Activated CD8-positive, alpha-beta memory T cell treated with anti-CD3 and anti-CD28 coated beads, Interleukin-2, amount 10 ng/mL, durations not matched to agents 7 days and 5 days (primary cell): ENCODE measurements at regions of chr19 and their contacts with region 1.

Region 1: DNA sequence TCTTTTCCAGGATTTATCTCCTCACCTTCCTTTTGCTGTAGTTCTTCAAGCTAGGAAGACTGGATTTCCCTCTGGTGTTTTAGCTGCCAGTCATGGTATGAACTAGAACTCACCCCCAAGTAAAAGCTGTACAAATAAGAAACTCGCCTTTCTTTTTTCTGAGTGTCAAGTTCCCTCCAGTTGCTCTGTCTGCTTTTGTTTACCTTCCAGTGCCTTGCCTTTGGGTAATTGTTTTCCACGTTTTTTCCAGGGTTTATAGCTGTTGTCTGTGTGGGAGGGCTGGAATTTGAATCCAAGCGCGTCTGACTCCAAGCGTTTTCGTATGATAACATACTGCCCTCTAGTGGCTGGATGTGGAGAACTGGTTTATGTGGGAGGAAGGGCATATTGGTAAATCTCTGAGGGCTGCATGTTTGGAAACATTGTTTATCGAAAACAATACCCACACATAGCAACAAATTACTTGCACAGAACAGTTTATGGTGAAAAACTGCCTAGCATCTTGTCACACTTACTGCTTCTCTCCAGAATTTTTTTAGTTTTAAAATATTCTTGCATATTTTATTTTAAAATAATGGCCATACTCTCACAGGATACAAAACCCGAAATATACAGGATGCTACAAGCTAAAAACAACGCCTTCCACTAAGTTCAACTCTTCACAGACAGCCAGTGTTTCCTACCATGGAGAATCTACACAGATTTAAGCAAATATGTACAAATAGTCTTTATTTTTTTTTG is 19.2 kb downstream of the RCN3 start:
- DNase-seq: peak; percentile 78
- ATAC-seq: peak; percentile 85
- H3K4me3 Mint-ChIP-seq: peak overlapping the region; percentile 23
- H3K27ac Mint-ChIP-seq: peak overlapping the region; percentile 55
- H3K4me1 Mint-ChIP-seq: peaks cover 23% of the 10 kb centered on the region
- H3K27me3 Mint-ChIP-seq: no peaks in the 10 kb centered on the region

Region 2: DNA sequence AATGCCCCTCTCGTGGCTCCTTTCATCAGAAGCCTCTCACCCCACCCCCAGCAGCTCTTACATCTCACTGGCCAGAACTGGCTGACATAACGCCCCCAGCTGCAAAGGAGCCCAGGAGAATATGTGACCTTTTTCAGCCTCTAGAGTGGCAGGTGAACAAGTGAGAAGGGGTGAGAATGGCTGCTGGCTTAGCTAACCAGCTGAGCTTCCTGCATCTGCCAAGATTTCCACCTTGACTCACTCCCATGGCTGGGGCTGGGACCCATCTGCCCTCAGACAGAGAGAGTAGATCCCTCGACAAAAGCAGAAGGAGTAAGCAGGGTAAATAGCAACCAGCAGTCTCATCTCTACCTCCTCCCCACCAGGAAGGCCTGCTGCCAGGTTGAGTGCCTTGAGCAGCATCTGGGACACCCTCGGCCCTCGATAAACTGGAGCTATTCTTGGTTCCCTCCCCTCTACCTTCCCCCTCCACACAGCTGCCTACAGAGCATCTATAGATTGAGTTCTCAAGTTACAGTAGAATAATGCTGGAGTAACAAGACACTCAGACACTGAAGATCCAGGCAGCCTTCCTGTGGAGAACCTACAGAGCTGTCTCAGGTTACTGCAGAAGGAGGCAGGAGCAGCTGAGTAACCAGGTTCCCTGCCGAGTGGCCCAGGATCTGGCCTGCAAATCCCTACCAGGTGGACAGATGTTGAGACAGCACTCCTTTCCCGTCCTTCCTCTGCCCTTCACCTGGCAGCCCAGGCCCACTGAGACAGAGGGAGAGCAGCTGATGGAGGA is 143.4 kb before region 1 on chr19:
- CTCF ChIA-PET with region 1: no interaction called
- DNase-seq: no peak
- ATAC-seq: no peak
- H3K4me3 Mint-ChIP-seq: no peak overlapping the region
- H3K27ac Mint-ChIP-seq: no peak overlapping the region
- H3K4me1 Mint-ChIP-seq: peaks cover 12% of the 10 kb centered on the region
- H3K27me3 Mint-ChIP-seq: no peaks in the 10 kb centered on the region

Region 3: GRCh38 chr19:49473868-49474544 is 73.0 kb before region 1 on chr19 and contains the start of gene FLT3LG:
- CTCF ChIA-PET with region 1: interaction called, 16 read pairs
- DNase-seq: peak; percentile 96
- ATAC-seq: peak; percentile 73
- H3K4me3 Mint-ChIP-seq: peak within 1 kb of the TSS; percentile 87
- H3K27ac Mint-ChIP-seq: peak within 1 kb of the TSS; percentile 85
- H3K4me1 Mint-ChIP-seq: peaks cover 54% of the 10 kb centered on the region
- H3K27me3 Mint-ChIP-seq: no peaks in the 10 kb centered on the region
- total RNA-seq, gene FLT3LG: 112 to 151 TPM

Region 4: DNA sequence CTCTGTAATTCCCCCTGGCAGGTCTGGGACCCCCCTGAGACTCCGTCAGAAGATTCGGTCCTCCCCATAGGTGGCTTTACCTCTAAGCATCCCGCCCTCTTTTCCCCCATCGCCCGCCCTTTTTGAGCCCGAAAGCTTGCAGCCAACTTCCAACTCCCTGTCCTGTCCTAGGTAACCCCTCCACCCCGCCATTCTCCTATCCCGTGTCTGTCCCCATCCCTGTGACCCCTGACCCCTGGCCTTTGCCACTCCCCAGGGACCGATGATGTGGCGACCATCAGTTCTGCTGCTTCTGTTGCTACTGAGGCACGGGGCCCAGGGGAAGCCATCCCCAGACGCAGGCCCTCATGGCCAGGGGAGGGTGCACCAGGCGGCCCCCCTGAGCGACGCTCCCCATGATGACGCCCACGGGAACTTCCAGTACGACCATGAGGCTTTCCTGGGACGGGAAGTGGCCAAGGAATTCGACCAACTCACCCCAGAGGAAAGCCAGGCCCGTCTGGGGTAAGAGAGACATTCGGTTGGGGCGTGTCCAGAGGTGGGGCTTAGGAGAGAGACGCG is 18.7 kb before region 1 on chr19:
- CTCF ChIA-PET with region 1: interaction called, 28 read pairs
- DNase-seq: no peak
- ATAC-seq: no peak
- H3K4me3 Mint-ChIP-seq: peak overlapping the region; percentile 69
- H3K27ac Mint-ChIP-seq: no peak overlapping the region
- H3K4me1 Mint-ChIP-seq: peaks cover 19% of the 10 kb centered on the region
- H3K27me3 Mint-ChIP-seq: peaks cover 3% of the 10 kb centered on the region

Region 5: GRCh38 chr19:49580264-49581006 is 33.4 kb after region 1 on chr19 and contains the start of gene NOSIP:
- CTCF ChIA-PET with region 1: interaction called, 325 read pairs
- DNase-seq: peak; percentile 98
- ATAC-seq: peak; percentile 98
- H3K4me3 Mint-ChIP-seq: peak within 1 kb of the TSS; percentile 92
- H3K27ac Mint-ChIP-seq: peak within 1 kb of the TSS; percentile 94
- H3K4me1 Mint-ChIP-seq: peaks cover 28% of the 10 kb centered on the region
- H3K27me3 Mint-ChIP-seq: no peaks in the 10 kb centered on the region
- total RNA-seq, gene NOSIP: 77.3 to 96.1 TPM

Region 6: DNA sequence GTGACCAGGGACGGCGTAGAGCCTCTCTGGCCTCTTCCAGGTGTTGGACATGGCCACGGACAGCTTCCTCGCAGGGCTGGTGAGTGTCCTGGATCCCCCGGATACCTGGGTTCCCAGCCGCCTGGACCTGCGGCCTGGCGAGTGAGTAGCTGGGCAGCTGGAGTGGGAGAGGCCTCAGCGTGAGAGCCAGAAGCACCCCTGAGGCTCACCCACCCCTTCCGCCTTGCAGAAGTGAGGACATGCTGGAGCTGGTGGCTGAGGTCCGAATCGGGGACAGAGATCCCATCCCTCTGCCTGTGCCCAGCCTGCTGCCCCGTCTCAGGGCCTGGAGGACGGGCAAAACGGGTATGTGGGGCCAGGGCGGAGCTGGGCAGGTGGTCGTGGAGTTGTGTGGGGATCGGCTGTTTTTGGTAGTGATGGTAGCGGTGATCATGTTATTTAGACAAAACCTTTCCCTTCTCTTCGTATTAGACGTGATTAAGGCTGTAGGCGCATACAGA is 99.5 kb after region 1 on chr19:
- CTCF ChIA-PET with region 1: no interaction called
- DNase-seq: no peak
- ATAC-seq: no peak
- H3K4me3 Mint-ChIP-seq: no peak overlapping the region
- H3K27ac Mint-ChIP-seq: no peak overlapping the region
- H3K4me1 Mint-ChIP-seq: peaks cover 24% of the 10 kb centered on the region
- H3K27me3 Mint-ChIP-seq: no peaks in the 10 kb centered on the region